Caco-2 (cell line): ENCODE measurements at regions of chr3 and their contacts with region 1.

Region 1: DNA sequence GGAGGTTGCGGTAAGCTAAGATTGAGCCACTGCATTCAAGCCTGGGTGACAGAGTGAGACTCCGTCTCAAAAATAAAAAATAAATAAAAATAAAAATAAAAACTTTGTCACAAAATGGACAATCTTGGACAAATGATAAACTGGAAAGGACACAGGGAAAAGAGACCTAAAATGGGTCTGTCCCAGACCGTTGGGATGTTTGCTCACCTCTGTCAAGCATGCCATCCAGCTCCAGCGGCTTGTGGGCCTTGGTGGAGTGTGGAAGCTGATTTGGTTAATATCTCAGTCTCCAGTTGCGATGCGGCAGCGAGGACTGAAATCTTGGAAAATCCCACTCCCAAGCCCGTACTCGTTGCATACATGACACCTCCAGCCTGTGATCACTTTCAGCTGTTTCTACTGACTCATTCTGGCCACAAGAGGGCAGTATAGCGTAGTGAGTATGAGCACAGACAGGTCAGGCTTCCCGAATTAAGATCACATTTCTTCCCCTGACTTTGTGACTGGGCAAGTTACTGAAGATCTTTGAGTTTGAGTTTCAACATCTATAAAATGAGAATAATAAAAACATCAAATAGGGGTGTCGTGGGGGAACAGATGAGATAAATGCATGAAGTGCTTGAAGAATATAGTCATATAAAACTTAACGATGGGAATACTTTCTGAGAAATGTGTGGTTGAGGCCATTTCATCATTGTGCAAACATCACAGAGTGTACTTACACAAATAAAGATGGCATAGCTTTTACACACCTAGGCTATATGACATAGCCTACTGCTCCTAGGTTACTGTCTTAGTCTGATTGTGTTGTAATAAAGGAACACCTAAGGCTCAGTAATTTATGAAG is 19.6 kb upstream of the MOBP start:
- DNase-seq: peak; percentile 74 to 80
- H3K4me3 ChIP-seq: no peak overlapping the region
- H3K4me3 Mint-ChIP-seq: no peak overlapping the region
- H3K27ac Mint-ChIP-seq: no peak overlapping the region
- H3K4me1 ChIP-seq: no peaks in the 10 kb centered on the region
- H3K4me1 Mint-ChIP-seq: peaks cover 10% of the 10 kb centered on the region
- H3K27me3 ChIP-seq: no peaks in the 10 kb centered on the region
- H3K27me3 Mint-ChIP-seq: no peaks in the 10 kb centered on the region
- CTCF ChIP-seq: peak; percentile 73 to 75

Region 2: DNA sequence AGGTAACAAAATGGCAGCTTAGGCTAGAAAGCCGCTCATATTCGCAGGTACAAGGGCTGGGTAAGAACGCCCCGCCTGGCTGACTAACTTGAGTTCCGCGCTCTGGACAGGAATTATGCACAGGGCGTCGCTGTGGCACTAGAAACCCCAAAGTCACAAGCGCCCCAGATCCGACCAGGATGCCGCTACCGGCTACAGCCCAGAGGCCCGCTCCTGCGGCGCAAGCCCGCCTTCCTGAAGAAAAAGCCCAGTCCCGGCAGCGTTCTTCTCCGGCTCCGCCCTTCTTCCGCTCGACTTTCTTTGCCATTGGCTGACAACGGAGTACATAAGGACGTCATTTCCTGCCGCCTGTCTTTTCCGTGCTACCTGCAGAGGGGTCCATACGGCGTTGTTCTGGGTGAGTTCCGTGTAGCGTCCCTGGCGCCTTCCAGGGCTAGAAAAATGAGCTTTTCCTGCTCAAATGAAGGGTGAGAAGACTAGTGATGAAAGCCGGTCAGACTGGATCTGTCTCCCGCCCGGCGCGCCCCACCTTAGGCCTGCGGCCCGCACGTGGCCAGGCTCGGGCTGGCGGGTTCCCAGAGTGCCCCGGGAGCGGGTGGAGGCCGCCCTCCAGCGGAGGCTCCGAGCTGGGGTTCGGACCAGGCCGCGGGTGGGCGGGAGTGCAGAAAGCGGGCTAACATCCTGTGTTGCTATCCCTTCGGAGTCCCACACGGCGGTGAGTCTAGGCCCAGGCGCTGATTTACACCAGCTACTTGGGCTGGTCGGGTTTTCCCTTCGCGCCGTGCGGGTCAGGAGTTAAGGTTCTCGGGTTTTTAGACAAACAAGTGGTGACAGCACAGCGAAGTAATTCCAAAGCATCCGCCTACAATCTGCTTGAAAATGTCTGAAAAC is 41.2 kb before region 1 on chr3 and contains the start of gene RPSA:
- CTCF ChIA-PET with region 1: no interaction called
- POLR2A ChIA-PET with region 1: no interaction called
- intact Hi-C with region 1: loop called (anchors 1 kb)
- DNase-seq: peak; percentile 97
- H3K4me3 ChIP-seq: peak within 1 kb of the TSS; percentile 76
- H3K4me3 Mint-ChIP-seq: peak within 1 kb of the TSS; percentile 88
- H3K27ac Mint-ChIP-seq: peak within 1 kb of the TSS; percentile 98
- H3K4me1 ChIP-seq: peaks cover 7% of the 10 kb centered on the region
- H3K4me1 Mint-ChIP-seq: peaks cover 9% of the 10 kb centered on the region
- H3K27me3 ChIP-seq: no peaks in the 10 kb centered on the region
- H3K27me3 Mint-ChIP-seq: no peaks in the 10 kb centered on the region
- CTCF ChIP-seq: peak in 1 of 2 experiments; percentile 53
- total RNA-seq, gene RPSA: 1,548 and 1,562 TPM in 2 replicates

Region 3: DNA sequence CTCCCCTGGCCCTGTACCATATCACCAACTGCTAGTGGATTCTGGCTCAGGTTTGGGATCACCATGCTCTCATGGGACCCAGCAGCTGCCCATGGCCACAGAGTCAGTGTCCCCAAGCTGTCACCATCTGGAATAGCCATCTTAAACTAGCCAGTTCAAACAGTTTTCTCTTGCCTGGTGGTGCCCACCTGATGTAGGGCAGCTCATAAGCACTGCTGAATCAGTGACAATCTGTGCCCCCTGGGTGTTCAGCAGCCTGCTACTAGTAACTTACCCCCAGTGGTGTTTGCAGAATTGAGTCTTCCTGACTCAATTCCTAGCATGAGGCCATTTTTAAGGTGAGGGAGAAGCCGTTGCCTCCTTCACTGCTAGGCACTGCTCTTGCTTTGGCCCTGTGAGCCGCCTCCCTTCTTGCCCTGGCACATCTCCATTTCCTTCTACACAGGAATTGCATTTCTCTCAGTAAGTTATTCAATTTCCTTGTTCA is 33.4 kb before region 1 on chr3:
- CTCF ChIA-PET with region 1: no interaction called
- POLR2A ChIA-PET with region 1: no interaction called
- intact Hi-C with region 1: loop called (anchors 1 kb)
- DNase-seq: no peak
- H3K4me3 ChIP-seq: no peak overlapping the region
- H3K4me3 Mint-ChIP-seq: no peak overlapping the region
- H3K27ac Mint-ChIP-seq: peak overlapping the region; percentile 39
- H3K4me1 ChIP-seq: peaks cover 6% of the 10 kb centered on the region; the same call in 1 of the 2 replicates
- H3K4me1 Mint-ChIP-seq: peaks cover 17% of the 10 kb centered on the region
- H3K27me3 ChIP-seq: no peaks in the 10 kb centered on the region
- H3K27me3 Mint-ChIP-seq: no peaks in the 10 kb centered on the region
- CTCF ChIP-seq: no peak

Region 4: DNA sequence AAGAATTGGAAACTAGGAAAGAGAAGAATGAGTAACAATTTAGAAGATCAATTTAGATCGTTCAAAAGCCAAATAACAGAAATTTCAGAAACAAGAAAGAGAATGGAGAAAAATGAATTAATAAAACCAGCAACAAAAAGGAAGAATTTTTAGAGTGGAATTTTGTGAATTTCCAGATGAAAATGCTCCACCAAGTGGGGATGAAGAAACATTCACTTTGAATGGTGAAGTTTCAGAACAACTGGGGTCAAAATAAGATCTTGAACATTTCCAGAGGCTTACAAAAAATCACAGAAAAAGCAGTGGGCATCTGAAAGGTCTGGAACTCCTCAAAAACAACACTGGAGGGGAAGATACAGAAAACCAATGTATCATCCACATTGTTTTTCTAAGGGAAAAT is 15.4 kb after region 1 on chr3:
- CTCF ChIA-PET with region 1: interaction called, 3 read pairs
- POLR2A ChIA-PET with region 1: no interaction called
- intact Hi-C with region 1: loop called (anchors 2 kb)
- DNase-seq: no peak
- H3K4me3 ChIP-seq: no peak overlapping the region
- H3K4me3 Mint-ChIP-seq: no peak overlapping the region
- H3K27ac Mint-ChIP-seq: no peak overlapping the region
- H3K4me1 ChIP-seq: no peaks in the 10 kb centered on the region
- H3K4me1 Mint-ChIP-seq: peaks cover 7% of the 10 kb centered on the region
- H3K27me3 ChIP-seq: no peaks in the 10 kb centered on the region
- H3K27me3 Mint-ChIP-seq: peaks cover 15% of the 10 kb centered on the region
- CTCF ChIP-seq: no peak

Region 5: GRCh38 chr3:39499651-39500240 is 51.9 kb after region 1 on chr3:
- CTCF ChIA-PET with region 1: interaction called, 19 read pairs
- POLR2A ChIA-PET with region 1: no interaction called
- intact Hi-C with region 1: loop called (anchors 1 kb)
- DNase-seq: no peak
- H3K4me3 ChIP-seq: no peak overlapping the region
- H3K4me3 Mint-ChIP-seq: no peak overlapping the region
- H3K27ac Mint-ChIP-seq: no peak overlapping the region
- H3K4me1 ChIP-seq: no peaks in the 10 kb centered on the region; the same call in 1 of the 2 replicates
- H3K4me1 Mint-ChIP-seq: no peaks in the 10 kb centered on the region
- H3K27me3 ChIP-seq: no peaks in the 10 kb centered on the region
- H3K27me3 Mint-ChIP-seq: peaks cover 14% of the 10 kb centered on the region
- CTCF ChIP-seq: no peak

Region 6: GRCh38 chr3:39990532-39990931 is 542.7 kb after region 1 on chr3:
- CTCF ChIA-PET with region 1: no interaction called
- POLR2A ChIA-PET with region 1: no interaction called
- intact Hi-C with region 1: loop called (anchors 1 kb)
- DNase-seq: peak; percentile 41 to 59
- H3K4me3 ChIP-seq: no peak overlapping the region
- H3K4me3 Mint-ChIP-seq: no peak overlapping the region
- H3K27ac Mint-ChIP-seq: no peak overlapping the region
- H3K4me1 ChIP-seq: no peaks in the 10 kb centered on the region
- H3K4me1 Mint-ChIP-seq: peaks cover 7% of the 10 kb centered on the region
- H3K27me3 ChIP-seq: no peaks in the 10 kb centered on the region
- H3K27me3 Mint-ChIP-seq: no peaks in the 10 kb centered on the region
- CTCF ChIP-seq: peak; percentile 49 to 57